Dorsolateral prefrontal cortex (tissue), 120 donors: ENCODE measurements at regions of chr18 and their contacts with region 1.

Region 1: GRCh38 chr18:3665780-3666525 is 216.0 kb downstream of the TGIF1 start:
- DNase-seq: peak; percentile 76 to 89 (median 83)
- H3K4me3 ChIP-seq: peak overlapping the region in 57 of 59 donors; percentile 6 to 67 (median 42)
- H3K27ac ChIP-seq: peak overlapping the region in 47 of 59 donors; percentile 5 to 83 (median 55)
- H3K27me3 ChIP-seq: no peaks in the 10 kb centered on the region
- CTCF ChIP-seq: peak; percentile 90 to 99 (median 97)

Region 2: GRCh38 chr18:3525870-3526420 is 140.0 kb before region 1 on chr18:
- intact Hi-C with region 1: loop called in 1 of 2 experiments (anchors 10 kb)
- DNase-seq: peak in 9 of 10 donors; percentile 47 to 70 (median 63)
- H3K4me3 ChIP-seq: peak overlapping the region in 54 of 59 donors; percentile 0 to 66 (median 40)
- H3K27ac ChIP-seq: peak overlapping the region in 58 of 59 donors; percentile 14 to 93 (median 74)
- H3K27me3 ChIP-seq: no peaks in the 10 kb centered on the region
- CTCF ChIP-seq: peak in 8 of 56 donors; percentile 8 to 17 (median 13)

Region 3: GRCh38 chr18:3604498-3605408 is 61.2 kb before region 1 on chr18:
- intact Hi-C with region 1: loop called in 1 of 2 experiments (anchors 5 kb)
- DNase-seq: no peak
- H3K4me3 ChIP-seq: peak overlapping the region in 56 of 59 donors; percentile 0 to 72 (median 50)
- H3K27ac ChIP-seq: peak overlapping the region; percentile 36 to 98 (median 92)
- H3K27me3 ChIP-seq: no peaks in the 10 kb centered on the region
- CTCF ChIP-seq: peak in 1 of 56 donors; percentile 4

Region 4: DNA sequence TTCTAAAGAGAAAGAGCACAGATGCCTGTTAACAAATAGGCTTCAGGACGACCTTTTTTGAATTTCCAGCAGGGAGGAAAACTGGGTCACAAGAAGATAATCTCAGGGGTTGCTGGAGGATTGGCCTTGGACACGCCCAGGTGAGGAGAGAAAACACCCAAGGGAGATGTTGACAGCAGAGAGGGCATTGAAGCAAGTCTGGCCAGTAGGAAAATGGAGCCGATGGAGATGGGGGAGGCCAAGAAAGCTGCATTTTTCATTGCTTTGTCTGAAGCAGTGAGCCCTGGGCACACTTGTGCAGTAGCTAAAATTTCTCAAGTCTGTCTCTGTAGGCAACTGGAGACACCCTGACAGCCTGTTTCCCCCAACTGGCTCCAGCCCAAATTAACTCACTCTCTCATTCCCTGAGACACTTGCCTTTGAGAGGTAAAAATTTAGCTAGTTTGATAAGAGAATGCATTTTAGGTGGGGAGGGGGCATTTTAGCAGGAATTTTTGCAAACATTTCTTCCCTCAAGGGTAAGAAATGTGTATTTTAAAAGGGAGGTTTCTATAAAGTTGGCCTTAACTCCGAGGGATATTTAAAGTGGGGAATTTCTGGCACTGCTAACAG is 50.5 kb before region 1 on chr18:
- intact Hi-C with region 1: no loop called
- DNase-seq: no peak
- H3K4me3 ChIP-seq: no peak overlapping the region
- H3K27ac ChIP-seq: peak overlapping the region in 5 of 59 donors; percentile 6 to 24 (median 10)
- H3K27me3 ChIP-seq: no peaks in the 10 kb centered on the region
- CTCF ChIP-seq: no peak